Calu3 (cell line): ENCODE measurements at regions of chrX and their contacts with region 1.

Region 1: DNA sequence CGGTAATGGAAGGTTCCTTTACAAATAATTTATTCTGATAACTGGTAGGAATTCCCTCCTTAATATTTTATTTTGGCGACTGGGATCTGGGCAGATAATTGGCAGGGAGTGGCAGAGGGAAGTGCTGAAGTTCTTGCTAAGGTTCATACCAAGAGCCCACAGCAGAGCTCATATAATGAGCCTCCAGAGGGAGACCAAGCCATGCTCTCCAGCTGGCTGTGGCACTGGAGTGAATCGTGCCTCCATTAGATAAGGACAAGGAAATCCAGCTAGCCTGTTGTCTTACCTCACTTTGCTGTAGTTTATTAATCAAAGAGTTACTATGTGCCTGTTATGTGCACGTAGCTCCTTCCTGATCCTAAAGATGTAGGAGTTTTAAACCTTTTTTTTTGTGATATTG is 1.3 kb downstream of the ASB12 start:
- DNase-seq: no peak
- H3K4me3 Mint-ChIP-seq: no peak overlapping the region
- H3K27ac Mint-ChIP-seq: no peak overlapping the region
- H3K4me1 Mint-ChIP-seq: no peaks in the 10 kb centered on the region
- H3K27me3 Mint-ChIP-seq: no peaks in the 10 kb centered on the region
- CTCF ChIP-seq: no peak

Region 2: DNA sequence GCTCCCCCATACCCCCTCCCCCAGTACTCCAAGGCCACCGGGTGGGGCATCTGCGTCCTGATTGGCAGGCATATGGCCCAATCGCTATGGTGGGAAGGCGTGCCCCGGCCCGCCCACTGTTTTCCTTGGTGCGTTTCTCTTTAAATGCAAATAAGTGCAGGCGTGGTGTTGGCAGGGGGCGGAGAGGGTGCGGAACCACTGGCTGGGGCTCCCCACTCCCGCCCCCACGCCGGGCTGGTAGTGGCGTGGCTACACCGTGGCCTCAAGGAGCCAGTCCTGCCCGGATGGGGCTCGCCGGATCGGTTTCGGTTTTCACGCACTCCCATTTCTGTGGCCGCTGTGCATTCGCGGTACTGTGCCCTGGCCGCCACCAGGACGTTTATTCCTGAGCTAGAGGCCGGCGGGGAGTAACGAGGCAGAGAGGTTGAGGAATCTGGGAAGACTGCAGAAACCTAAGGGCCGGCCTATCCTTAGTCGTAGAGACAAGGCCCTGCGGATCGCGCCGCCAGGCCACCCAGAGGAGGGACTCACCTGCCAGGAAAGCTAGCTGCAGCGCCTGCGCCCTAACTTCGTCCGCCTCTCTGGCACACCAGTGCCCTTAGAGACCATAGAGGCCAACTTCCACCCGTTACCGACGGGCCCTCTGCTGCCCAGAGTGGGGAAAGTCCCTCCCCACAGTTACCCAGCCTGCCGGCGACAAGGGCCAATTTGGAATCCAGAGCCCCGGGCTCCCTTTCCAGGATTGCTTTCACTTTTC is 23.2 kb before region 1 on chrX:
- CTCF ChIA-PET with region 1: no interaction called
- intact Hi-C with region 1: loop called (anchors 1 kb)
- DNase-seq: peak; percentile 92
- H3K4me3 Mint-ChIP-seq: peak overlapping the region; percentile 80
- H3K27ac Mint-ChIP-seq: peak overlapping the region; percentile 76
- H3K4me1 Mint-ChIP-seq: peaks cover 14% of the 10 kb centered on the region
- H3K27me3 Mint-ChIP-seq: no peaks in the 10 kb centered on the region
- CTCF ChIP-seq: no peak